Left ventricle myocardium superior (tissue), 1 donor: ENCODE measurements at regions of chr9 and their contacts with region 1.

Region 1: DNA sequence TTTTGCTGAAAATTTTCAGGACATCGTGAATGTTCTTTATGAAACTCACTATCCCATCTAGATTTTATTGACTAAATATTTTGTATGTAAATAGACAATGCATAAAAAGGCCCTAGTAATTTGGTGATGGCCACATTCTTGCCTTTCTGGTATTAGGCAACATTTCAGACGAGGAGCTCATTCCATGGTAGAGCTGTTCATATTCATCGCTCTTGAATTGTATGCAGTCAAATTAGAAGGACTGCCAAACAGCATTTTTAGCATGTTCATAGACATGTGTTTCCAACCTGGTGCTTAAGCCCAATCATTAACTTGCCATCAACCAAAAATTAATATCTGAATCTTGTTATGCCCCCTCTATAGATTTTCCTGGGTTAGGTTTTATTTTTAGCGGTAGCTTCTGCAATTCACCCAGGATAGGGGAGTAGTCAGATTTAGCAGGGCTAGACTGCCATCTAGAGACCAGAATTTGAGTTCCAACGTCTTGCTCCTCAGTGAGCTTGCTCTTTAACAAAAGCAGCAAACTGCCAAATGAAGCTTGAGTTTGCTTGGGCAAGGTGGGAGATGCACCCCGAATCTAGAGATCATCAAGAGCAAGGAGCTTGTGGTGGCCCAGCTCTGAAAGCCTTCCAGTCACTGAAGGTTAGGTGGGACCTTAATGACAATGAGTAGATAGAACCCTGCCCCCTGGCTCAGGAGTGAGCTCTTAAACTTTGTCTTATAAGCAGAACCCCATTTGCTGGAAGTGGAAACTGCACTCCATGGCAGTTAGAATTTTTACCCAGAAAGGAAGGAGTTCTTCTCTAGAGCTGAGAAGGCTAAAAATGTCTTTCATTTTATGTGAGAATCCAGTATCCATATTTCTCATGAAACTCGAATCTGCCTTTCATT is 456.2 kb downstream of the RASEF start:
- DNase-seq: no peak
- ATAC-seq: peak; percentile 82

Region 2: DNA sequence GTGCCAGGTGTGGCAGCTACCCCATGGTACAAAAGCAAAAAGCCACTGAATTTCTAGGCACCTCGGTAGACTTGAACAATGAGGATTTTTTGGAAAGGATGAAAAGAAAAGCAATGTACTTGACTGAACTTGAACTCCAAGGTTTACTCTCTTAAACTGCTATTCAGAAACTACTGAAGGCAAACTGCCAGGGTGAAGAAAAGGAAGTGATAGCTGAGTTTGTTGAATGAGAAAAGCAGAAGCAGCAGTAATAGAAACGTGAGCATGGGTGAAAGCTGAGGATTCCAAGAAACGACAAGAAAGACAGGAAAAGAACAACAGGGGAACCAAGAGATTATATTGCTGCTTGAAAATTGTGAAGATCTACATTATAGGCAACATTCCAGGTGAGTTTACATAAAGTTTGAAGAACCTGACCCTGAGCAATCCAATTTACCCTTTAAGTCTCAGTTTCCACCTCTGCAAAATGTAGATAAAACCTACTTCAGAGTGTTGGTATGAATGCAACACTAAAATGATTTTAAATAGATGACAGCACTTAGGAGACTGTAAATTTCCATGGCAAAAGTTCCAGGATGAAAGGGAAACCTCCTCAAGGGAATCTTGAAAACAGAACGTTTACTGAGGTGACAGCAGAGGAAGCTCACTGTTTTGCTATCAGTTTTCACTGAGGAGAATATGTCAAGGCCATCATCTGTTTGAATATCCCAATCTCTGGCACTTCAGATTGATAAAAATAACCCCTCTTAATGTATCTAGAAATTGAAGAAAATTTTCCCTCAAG is 372.4 kb before region 1 on chr9:
- intact Hi-C with region 1: no loop called
- DNase-seq: no peak
- ATAC-seq: no peak

Region 3: GRCh38 chr9:82488313-82489200 is 118.2 kb before region 1 on chr9:
- intact Hi-C with region 1: loop called (anchors 10 kb)
- DNase-seq: peak; percentile 22
- ATAC-seq: peak; percentile 89

Region 4: GRCh38 chr9:82532504-82533180 is 74.1 kb before region 1 on chr9:
- intact Hi-C with region 1: loop called (anchors 5 kb)
- DNase-seq: no peak
- ATAC-seq: no peak